ENCODE measurements at regions of chr6 and their contacts with region 1.

Region 1: DNA sequence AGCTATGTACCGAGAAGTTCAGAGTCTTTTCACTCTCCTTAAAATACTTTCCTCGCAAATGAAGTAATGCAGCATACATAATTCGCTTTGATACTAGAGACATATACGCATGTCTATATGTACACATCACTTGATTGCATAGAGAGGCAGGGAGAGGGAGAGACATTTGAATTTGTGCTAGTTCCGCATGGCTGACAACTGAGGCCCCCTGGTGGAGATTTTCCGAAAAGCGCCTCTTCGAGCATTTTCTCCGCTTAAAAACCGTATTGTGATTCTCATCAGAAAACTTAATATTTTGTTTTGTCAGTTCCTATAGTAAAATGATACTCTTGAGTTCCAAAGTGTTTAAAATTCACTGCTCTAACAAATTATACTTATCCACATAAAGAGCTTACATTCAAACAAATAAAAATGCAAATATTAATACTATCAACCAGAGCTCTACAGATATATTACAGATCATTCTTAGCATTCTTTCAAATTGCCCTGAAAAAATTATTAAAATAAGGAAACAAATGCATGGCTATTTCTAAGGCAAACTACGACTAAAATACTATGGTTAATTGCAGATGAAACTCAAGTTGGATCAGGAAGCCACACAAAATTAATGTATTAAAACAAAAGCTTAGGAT is 637 bp downstream of the MYLK4 start:
- DNase-seq: peak; percentile 83
- ATAC-seq: peak; percentile 66
- H3K4me3 Mint-ChIP-seq: no peak overlapping the region
- H3K27ac Mint-ChIP-seq: no peak overlapping the region
- H3K4me1 Mint-ChIP-seq: peaks cover 3% of the 10 kb centered on the region
- H3K27me3 Mint-ChIP-seq: peaks cover 8% of the 10 kb centered on the region

Region 2: DNA sequence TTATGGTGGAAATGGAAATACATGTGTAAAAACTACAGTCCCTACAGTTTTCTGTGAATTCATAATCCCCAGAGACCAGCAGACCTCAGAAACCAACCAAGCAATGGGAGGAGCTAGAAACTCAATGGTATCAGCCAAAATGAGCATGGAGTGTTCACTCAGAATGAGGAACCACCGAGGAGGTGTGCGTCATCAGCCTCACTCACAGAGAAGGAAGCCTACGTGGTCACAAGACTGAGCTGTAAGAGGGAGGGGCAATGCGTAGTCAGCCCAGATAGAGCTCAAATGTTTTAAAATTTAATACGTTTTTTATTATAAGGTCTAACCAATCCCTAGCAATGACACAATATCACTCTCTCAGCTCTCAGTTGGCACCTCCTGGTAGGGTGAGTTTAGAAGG is 16.8 kb before region 1 on chr6:
- CTCF ChIA-PET with region 1: interaction called, 101 read pairs
- POLR2A ChIA-PET with region 1: interaction called, 3 read pairs
- intact Hi-C with region 1: loop called in 1 of 2 experiments (anchors 1 kb)
- DNase-seq: peak; percentile 78
- ATAC-seq: peak; percentile 99
- H3K4me3 Mint-ChIP-seq: no peak overlapping the region
- H3K27ac Mint-ChIP-seq: no peak overlapping the region
- H3K4me1 Mint-ChIP-seq: peaks cover 9% of the 10 kb centered on the region
- H3K27me3 Mint-ChIP-seq: peaks cover 2% of the 10 kb centered on the region

Region 3: DNA sequence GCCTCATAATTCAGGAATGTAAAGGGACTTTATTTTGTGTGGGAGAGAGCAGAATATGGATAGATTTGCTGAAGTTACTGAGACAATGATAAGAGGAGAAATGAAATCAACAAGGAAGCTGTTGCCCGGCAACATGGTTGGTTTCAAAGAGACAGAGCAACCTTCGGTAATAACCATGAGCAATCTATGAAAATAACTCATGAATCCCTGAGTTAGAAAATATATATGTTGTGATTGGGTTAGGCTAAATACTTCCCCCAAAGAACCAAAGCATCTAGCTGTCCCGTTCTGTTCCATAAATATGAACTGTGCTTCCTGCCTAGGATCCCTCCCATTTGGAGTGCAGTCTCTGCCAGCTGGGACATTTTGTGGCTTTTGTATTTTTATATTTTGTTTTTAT is 68.5 kb after region 1 on chr6:
- CTCF ChIA-PET with region 1: no interaction called
- POLR2A ChIA-PET with region 1: no interaction called
- intact Hi-C with region 1: no loop called
- DNase-seq: peak; percentile 42
- ATAC-seq: no peak
- H3K4me3 Mint-ChIP-seq: no peak overlapping the region
- H3K27ac Mint-ChIP-seq: peak overlapping the region; percentile 1
- H3K4me1 Mint-ChIP-seq: peaks cover 40% of the 10 kb centered on the region
- H3K27me3 Mint-ChIP-seq: no peaks in the 10 kb centered on the region

Region 4: GRCh38 chr6:3061501-3061941 is 311.4 kb after region 1 on chr6:
- CTCF ChIA-PET with region 1: no interaction called
- POLR2A ChIA-PET with region 1: no interaction called
- intact Hi-C with region 1: no loop called
- DNase-seq: peak; percentile 39
- ATAC-seq: peak; percentile 11
- H3K4me3 Mint-ChIP-seq: no peak overlapping the region
- H3K27ac Mint-ChIP-seq: no peak overlapping the region
- H3K4me1 Mint-ChIP-seq: peaks cover 25% of the 10 kb centered on the region
- H3K27me3 Mint-ChIP-seq: no peaks in the 10 kb centered on the region